ENCODE measurements at regions of chr2 and their contacts with region 1.

Region 1: GRCh38 chr2:74334931-74335333 is 8.3 kb downstream of the SLC4A5 start:
- DNase-seq: peak; percentile 74
- H3K4me3 ChIP-seq: peak overlapping the region in 1 of 2 experiments; percentile 32; a peak in 1 of 4 replicates
- H3K27ac ChIP-seq: no peak overlapping the region
- H3K4me1 ChIP-seq: no peaks in the 10 kb centered on the region
- H3K27me3 ChIP-seq: no peaks in the 10 kb centered on the region
- CTCF ChIP-seq: peak; percentile 87
- EP300 ChIP-seq: no peak
- RAD21 ChIP-seq: peak; percentile 82

Region 2: GRCh38 chr2:74250189-74250631 is 84.7 kb before region 1 on chr2:
- CTCF ChIA-PET with region 1: interaction called, 125 read pairs
- POLR2A ChIA-PET with region 1: no interaction called
- DNase-seq: peak; percentile 85
- H3K4me3 ChIP-seq: no peak overlapping the region
- H3K27ac ChIP-seq: no peak overlapping the region
- H3K4me1 ChIP-seq: no peaks in the 10 kb centered on the region
- H3K27me3 ChIP-seq: no peaks in the 10 kb centered on the region
- CTCF ChIP-seq: peak; percentile 88
- EP300 ChIP-seq: no peak
- RAD21 ChIP-seq: peak; percentile 81

Region 3: DNA sequence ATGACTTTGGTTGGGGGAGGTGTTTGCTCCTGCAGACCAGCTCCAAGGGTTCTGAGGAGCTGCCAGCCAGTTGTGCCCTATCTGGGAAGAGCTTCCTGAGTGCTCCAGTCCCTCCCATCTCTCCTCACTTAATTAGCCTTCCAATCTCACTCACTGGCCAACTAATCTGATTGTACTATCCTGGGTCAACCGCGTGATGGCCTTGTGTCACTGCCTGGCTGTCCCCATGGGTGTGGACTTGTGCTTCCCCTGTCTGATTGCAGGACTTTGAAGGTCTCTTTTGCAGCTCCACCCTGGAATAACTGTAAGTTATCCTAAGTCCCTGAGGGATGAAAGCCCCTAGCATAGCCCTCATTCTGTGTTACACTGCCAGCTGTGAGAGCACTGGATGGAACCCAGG is 56.8 kb before region 1 on chr2:
- CTCF ChIA-PET with region 1: interaction called, 19 read pairs
- POLR2A ChIA-PET with region 1: no interaction called
- DNase-seq: peak; percentile 71
- H3K4me3 ChIP-seq: no peak overlapping the region
- H3K27ac ChIP-seq: no peak overlapping the region
- H3K4me1 ChIP-seq: peaks cover 0 to 13% of the 10 kb centered on the region in 2 experiments; a peak in 2 of 4 replicates
- H3K27me3 ChIP-seq: no peaks in the 10 kb centered on the region
- CTCF ChIP-seq: no peak
- EP300 ChIP-seq: no peak
- RAD21 ChIP-seq: peak; percentile 53

Region 4: DNA sequence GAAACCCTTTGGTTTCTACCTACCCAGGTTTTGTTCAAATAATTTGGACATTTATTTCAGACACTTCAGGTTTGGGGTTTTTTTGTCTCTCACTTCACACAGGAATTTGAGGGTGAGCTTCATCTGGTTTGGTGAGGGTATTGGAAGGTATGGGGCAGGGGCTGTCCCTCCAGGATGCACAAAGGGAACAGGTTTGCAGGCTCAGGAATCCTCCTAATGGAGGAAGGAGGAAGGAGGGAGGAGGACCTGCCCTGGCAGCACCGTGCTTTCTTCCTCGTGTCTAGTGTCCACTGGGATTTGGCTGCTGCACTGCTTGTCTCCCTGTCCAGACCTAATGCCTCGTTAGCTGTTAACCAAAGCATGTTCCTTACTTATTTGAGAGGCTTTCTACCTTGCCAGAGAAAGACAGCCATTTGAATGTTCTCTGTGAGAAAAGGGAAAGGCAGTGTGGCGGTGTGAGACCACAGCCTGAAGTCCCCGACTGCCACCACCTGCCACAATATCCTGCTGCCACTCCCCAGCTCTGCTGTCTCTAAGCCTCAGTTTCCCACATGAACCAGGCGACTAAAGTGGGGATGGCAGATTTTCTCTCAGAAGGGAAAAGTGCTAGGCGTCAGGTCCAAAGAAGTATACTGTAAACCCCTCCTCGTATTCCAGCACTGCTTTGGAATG is 10.5 kb after region 1 on chr2:
- CTCF ChIA-PET with region 1: interaction called, 57 read pairs
- POLR2A ChIA-PET with region 1: interaction called, 3 read pairs
- DNase-seq: no peak
- H3K4me3 ChIP-seq: no peak overlapping the region
- H3K27ac ChIP-seq: no peak overlapping the region
- H3K4me1 ChIP-seq: peaks cover 0 to 10% of the 10 kb centered on the region in 2 experiments; a peak in 2 of 4 replicates
- H3K27me3 ChIP-seq: no peaks in the 10 kb centered on the region
- CTCF ChIP-seq: no peak
- EP300 ChIP-seq: no peak
- RAD21 ChIP-seq: no peak

Region 5: DNA sequence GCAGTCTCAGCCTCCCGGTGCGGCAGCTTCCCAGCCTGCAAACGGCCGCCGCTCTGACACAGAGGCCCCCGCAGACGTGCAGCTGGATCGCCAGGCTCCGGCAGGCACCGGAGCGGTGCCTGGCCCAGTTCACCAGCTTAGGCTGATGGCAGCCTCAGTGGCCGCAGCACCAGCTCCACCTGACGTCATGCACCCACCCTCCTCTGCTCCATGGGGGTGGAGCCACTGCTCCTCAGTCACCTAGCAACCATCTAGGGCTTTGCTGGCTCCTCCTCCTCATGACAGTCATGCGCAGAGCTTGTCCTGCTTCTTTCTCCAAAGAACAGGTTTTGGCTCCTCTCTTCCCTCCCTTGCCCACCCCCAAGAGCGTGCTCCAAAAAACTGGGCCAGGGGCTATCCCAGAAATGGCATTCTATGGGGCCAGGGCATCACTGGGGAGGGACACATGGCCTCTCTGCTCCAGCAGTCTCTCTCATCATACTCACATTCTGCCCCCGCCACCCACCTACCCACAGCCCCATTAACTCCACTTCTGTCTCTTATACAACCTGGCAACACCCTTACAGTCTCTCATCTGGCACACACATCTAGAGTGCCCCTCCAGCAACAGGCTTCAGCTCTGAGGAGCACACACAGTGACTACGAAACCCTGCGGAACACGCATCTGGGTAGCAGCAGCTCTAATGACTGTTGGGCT is 39.7 kb after region 1 on chr2:
- CTCF ChIA-PET with region 1: interaction called, 17 read pairs
- POLR2A ChIA-PET with region 1: no interaction called
- DNase-seq: peak; percentile 99
- H3K4me3 ChIP-seq: peak overlapping the region; percentile 28 to 50; a peak in 2 of 4 replicates
- H3K27ac ChIP-seq: peak overlapping the region in 1 of 2 experiments; percentile 55; a peak in 1 of 4 replicates
- H3K4me1 ChIP-seq: peaks cover 8 to 27% of the 10 kb centered on the region in 2 experiments; a peak in 2 of 4 replicates
- H3K27me3 ChIP-seq: no peaks in the 10 kb centered on the region
- CTCF ChIP-seq: no peak
- EP300 ChIP-seq: no peak
- RAD21 ChIP-seq: no peak

Region 6: DNA sequence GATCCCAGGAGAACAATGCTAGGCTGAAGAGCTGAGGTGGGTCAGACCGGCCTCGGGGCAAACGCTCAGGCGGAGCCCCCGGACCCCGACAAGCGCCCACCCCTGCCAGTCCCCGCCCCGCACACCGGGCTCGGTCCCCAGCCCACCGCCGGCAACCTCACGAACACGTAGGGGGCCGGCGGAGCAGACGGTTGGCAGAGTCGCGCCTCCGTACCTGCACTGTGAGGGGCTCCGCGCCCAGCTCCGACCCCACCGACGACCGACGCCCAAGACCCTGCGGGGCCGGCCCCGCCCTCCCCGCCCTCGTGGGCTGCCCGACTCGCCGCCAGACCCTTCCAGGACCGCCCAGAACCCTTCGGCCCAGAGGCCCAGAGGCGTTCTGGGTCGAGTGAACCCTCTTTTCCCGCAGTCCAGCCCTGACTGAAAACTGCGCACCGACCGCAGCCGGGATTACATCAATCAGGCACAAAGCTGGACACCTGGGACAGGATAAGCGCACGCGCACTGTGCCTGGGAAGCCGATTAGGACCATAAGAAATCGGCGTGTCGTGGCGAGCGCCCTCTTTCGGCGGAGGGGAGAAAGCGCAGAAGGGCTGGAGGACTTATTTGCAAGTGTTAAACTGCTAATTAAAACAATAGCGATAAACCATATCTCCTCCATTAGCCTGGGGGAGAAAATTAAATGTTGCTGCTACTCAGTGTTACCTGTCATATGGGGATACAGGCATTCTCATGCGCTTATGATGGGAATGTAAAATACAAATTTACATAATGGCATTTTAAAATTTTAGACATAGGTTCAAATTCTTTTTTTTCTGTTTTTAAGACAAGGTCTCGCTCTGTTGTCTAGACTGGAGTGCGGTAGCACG is 56.9 kb after region 1 on chr2:
- CTCF ChIA-PET with region 1: interaction called, 52 read pairs
- POLR2A ChIA-PET with region 1: no interaction called
- DNase-seq: peak; percentile 94
- H3K4me3 ChIP-seq: peak overlapping the region; percentile 84 to 94
- H3K27ac ChIP-seq: peak overlapping the region; percentile 64 to 80
- H3K4me1 ChIP-seq: peaks cover 9 to 20% of the 10 kb centered on the region in 2 experiments; a peak in 3 of 4 replicates
- H3K27me3 ChIP-seq: no peaks in the 10 kb centered on the region
- CTCF ChIP-seq: peak; percentile 98
- EP300 ChIP-seq: no peak
- RAD21 ChIP-seq: peak; percentile 66

Region 7: DNA sequence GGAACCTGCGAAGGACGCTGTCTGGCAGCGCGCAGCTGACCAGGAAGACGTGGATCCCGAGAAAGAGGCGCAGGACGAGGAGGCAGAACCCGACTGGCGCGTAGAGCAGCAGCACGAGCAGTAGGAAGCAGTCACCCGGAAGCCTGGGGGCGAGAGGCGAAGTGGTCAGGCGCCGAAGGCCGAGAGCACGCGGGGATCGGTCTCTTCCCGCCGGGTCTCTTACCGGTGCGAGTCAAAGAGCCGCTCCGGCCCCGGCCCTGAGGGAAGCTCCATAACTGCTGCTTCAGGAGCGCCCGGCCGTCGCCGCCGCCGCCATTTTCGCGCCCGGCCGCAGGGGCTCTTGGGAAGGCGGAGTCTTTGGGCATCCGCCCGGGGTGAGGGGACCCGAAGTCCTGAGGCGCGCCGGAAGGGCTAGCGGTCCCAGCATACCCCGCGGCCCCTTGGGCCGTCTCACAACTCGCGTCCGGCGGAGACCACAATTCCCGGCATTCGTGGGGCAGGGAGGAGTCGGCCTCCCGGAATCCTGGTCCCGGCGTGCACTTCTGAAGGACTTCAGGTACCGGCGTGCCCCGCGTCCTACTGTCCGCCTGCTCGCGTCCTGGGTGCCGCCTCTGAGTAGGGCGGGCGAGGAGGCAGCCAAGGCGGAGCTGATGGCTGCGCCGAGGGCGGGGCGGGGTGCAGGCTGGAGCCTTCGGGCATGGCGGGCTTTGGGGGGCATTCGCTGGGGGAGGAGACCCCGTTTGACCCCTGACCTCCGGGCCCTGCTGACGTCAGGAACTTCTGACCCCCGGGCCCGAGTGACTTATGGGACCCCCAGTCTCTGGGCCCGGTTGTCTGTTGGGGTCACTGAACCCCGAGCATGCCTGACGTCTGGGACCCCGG is 194.7 kb after region 1 on chr2 and contains the starts of genes AUP1 and HTRA2:
- CTCF ChIA-PET with region 1: no interaction called
- POLR2A ChIA-PET with region 1: no interaction called
- DNase-seq: peak; percentile 98
- H3K4me3 ChIP-seq: peak within 1 kb of the TSS; percentile 83 to 99
- H3K27ac ChIP-seq: peak within 1 kb of the TSS; percentile 68 to 92
- H3K4me1 ChIP-seq: peaks cover 13 to 24% of the 10 kb centered on the region in 2 experiments
- H3K27me3 ChIP-seq: no peaks in the 10 kb centered on the region
- CTCF ChIP-seq: no peak
- EP300 ChIP-seq: no peak
- RAD21 ChIP-seq: 0 out of 2 replicates have a peak, but pooled peaks have one; percentile 4
- polyA plus RNA-seq, gene AUP1: 118 and 151 TPM in 2 replicates
- polyA plus RNA-seq, gene HTRA2: 55.7 and 60.4 TPM in 2 replicates

Region 8: DNA sequence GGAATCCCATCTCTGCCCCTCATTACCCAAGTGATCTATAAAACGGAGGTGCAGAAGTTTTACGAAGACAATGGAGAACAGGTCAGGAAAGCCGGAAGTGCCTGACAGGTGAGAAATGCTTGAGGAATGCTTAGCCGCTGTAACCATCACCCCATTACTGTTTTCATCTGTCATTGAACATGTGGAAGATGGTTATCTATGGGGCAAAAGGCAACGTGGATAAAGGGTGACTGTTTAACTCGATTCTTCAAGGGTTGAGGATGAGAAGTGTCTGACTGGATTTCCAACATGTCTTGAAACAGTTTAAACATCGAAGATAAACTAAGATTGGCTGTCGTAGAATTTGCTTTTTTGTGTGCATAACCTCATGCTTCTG is 516.2 kb after region 1 on chr2:
- CTCF ChIA-PET with region 1: no interaction called
- POLR2A ChIA-PET with region 1: no interaction called
- DNase-seq: no peak
- H3K4me3 ChIP-seq: no peak overlapping the region
- H3K27ac ChIP-seq: no peak overlapping the region
- H3K4me1 ChIP-seq: peaks cover 20 to 32% of the 10 kb centered on the region in 2 experiments; a peak in 3 of 4 replicates
- H3K27me3 ChIP-seq: no peaks in the 10 kb centered on the region
- CTCF ChIP-seq: no peak
- EP300 ChIP-seq: no peak
- RAD21 ChIP-seq: no peak

Measured in SK-N-SH (cell line).